ENCODE measurements at regions of chr18 and their contacts with region 1.

Region 1: DNA sequence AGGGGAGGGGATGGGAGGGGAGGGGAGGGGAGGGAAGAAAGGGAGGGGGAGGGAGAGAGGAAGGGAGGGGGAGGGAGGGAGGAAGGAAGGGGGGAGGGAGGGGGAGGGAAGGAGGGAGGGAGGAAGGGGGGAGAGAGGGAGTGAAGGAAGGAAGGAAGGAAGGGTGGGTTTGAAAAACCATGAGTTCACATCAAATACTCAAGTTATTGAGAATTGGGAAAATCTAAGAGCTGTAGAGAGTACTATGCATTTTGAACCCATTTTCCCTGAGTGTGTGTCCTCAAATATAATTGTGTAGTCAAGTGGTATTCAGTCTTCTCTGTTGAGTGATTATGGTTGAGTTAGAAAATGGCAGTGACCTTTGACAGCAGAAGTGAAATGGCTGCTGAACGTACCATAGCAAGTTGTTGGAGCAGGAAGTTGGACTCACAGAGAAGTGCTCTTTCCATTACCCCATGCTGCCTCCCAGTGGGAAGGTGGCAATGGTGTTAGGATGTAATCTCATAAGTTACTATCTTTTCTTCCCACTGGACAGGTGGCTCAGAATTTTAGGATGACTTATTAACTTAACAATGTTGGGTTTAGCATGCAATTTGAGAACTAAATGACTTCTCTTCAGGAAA is 214.6 kb downstream of the SETBP1 start:
- DNase-seq: peak; percentile 76
- H3K4me3 Mint-ChIP-seq: no peak overlapping the region
- H3K27ac Mint-ChIP-seq: no peak overlapping the region
- H3K4me1 Mint-ChIP-seq: peaks cover 8% of the 10 kb centered on the region
- H3K27me3 Mint-ChIP-seq: no peaks in the 10 kb centered on the region
- CTCF ChIP-seq: peak; percentile 45

Region 2: GRCh38 chr18:43620936-43621335 is 1274.4 kb before region 1 on chr18:
- CTCF ChIA-PET with region 1: interaction called, 3 read pairs
- POLR2A ChIA-PET with region 1: no interaction called
- intact Hi-C with region 1: loop called (anchors 1 kb)
- DNase-seq: peak; percentile 54
- H3K4me3 Mint-ChIP-seq: no peak overlapping the region
- H3K27ac Mint-ChIP-seq: no peak overlapping the region
- H3K4me1 Mint-ChIP-seq: no peaks in the 10 kb centered on the region
- H3K27me3 Mint-ChIP-seq: peaks cover 34% of the 10 kb centered on the region
- CTCF ChIP-seq: peak; percentile 47

Region 3: GRCh38 chr18:44325903-44326635 is 569.2 kb before region 1 on chr18:
- CTCF ChIA-PET with region 1: no interaction called
- POLR2A ChIA-PET with region 1: no interaction called
- intact Hi-C with region 1: loop called (anchors 1 kb)
- DNase-seq: peak; percentile 78
- H3K4me3 Mint-ChIP-seq: no peak overlapping the region
- H3K27ac Mint-ChIP-seq: no peak overlapping the region
- H3K4me1 Mint-ChIP-seq: no peaks in the 10 kb centered on the region
- H3K27me3 Mint-ChIP-seq: no peaks in the 10 kb centered on the region
- CTCF ChIP-seq: peak; percentile 54

Region 4: DNA sequence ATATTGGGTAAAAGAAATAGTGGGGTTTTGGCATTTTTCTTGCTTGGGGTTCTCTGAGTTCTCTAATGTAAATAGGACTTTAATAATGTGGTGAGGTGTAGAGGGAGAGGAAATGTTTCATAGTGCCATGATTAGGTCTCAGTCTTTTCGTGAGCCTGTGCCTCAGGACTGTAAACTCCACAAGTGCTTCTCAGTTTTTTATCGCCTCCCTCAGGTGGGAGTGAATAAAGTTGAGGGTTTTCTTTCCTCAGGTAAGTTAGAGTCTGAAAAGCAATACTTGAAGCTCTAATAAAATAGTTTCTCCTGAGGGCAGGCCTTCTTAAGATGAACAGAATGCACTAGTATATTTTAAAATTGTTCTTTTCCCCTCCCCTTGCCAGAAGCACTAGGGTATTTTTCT is 457.7 kb before region 1 on chr18:
- CTCF ChIA-PET with region 1: no interaction called
- POLR2A ChIA-PET with region 1: no interaction called
- intact Hi-C with region 1: loop called (anchors 5 kb)
- DNase-seq: no peak
- H3K4me3 Mint-ChIP-seq: no peak overlapping the region
- H3K27ac Mint-ChIP-seq: no peak overlapping the region
- H3K4me1 Mint-ChIP-seq: no peaks in the 10 kb centered on the region
- H3K27me3 Mint-ChIP-seq: no peaks in the 10 kb centered on the region
- CTCF ChIP-seq: no peak

Region 5: DNA sequence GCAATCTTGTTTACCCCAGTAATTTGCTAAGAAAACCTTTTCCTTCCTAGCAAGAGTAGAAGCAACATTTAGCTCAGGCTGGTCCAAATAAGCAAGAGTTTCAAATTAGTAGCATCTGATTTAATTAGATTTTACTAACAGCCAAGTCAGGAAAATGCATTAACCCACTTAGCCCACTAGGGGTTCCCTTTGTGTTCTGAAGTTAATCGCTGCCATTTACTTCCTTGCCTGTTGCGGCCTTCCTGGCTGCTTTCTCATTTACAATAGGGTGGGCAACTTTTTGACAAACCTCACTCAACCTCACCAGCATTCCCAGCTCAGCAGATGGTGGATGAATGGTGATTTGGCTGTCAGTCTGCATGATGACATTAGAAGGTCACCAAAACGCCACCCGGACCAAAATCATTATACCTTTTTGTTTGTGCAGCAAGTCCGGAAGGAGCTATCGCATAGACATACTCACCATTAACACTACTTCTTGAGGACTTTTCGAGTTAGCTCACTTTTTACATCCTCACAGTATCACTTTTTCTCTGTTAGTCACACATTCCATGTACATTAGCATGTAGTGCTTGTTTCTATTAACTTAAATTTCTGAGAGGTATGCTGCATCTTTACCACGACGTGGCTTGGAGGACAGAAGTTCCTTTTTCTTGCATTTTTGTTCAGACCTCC is 316.1 kb before region 1 on chr18:
- CTCF ChIA-PET with region 1: interaction called, 7 read pairs
- POLR2A ChIA-PET with region 1: no interaction called
- intact Hi-C with region 1: loop called (anchors 2 kb)
- DNase-seq: peak; percentile 53
- H3K4me3 Mint-ChIP-seq: no peak overlapping the region
- H3K27ac Mint-ChIP-seq: no peak overlapping the region
- H3K4me1 Mint-ChIP-seq: peaks cover 13% of the 10 kb centered on the region
- H3K27me3 Mint-ChIP-seq: no peaks in the 10 kb centered on the region
- CTCF ChIP-seq: peak; percentile 59